Sciatic nerve (tissue), 2 donors: ENCODE measurements at regions of chr12 and their contacts with region 1.

Region 1: DNA sequence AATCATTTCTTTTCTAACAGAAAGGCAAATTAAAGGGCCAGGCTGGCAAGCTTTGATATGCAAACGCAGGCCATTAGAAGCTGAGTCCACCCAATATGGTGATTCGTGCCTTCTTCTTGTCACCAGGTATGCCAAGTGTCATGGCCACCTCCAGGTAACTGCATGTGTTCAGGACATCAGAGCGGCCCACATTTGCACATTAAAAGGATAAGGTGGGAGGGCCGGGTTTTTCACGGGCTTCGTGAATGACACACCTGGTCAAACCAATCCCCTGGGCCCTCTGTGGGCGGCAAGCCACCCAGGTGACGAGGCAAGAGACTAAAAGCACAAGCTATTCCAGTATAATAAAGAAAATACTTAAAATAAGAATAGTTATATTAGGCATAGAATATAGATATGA is 75.9 kb upstream of the TSPAN11 start:
- DNase-seq: no peak
- ATAC-seq: no peak

Region 2: GRCh38 chr12:30774599-30774998 is 76.1 kb before region 1 on chr12:
- intact Hi-C with region 1: no loop called
- DNase-seq: no peak
- ATAC-seq: no peak

Region 3: DNA sequence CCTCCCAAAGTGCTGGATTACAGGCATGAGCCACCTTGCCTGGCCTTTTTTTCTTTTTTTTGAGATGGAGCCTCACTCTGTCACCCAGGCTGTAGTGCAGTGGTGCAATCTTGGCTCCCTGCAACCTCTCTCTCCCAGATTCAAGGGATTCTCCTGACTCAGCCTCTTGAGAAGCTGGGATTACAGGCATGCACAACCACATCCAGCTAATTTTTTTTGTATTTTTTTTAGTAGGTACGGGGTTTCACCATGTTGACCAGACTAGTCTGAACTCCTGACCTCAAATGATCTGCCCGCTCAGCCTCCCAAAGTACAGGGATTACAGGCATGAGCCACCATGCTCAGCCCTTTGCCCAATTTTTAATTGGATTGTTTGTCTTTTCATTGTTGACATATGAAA is 417.3 kb after region 1 on chr12:
- intact Hi-C with region 1: loop called (anchors 10 kb)
- DNase-seq: no peak
- ATAC-seq: no peak